CD4-positive, alpha-beta memory T cell (primary cell): ENCODE measurements at regions of chr1 and their contacts with region 1.

Region 1: DNA sequence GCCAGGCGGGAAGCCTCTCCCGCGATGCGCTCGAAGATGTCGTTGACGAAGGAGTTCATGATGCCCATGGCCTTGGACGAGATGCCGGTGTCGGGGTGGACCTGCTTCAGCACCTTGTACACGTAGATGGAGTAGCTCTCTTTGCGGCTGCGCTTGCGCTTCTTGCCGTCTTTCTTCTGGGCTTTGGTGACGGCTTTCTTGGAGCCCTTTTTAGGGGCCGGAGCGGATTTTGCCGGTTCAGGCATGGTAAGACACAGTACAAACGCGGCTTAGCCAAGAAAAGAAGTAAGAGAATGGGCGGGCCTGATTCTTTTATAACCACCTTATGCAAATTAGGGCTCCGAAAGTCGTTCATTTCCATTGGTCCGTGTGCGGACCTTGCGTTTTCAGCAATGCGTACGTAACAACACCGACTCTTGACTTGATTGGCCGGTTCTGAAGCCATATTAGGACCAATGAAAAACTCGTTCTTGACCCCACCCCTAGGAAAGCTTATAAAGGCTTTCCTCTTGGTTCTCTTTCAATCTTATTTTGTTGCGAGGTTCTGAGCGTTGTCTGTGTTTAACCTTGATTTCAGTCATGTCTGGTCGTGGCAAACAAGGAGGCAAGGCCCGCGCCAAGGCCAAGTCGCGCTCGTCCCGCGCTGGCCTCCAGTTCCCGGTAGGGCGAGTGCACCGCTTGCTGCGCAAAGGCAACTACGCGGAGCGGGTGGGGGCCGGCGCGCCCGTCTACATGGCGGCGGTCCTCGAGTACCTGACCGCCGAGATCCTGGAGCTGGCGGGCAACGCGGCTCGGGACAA is 12.8 kb upstream of the BOLA1 start:
- DNase-seq: peak; percentile 94 to 97 (median 96)
- H3K4me3 ChIP-seq: peak overlapping the region; percentile 75 to 82
- H3K4me3 Mint-ChIP-seq: no peak overlapping the region
- H3K27ac ChIP-seq: peak overlapping the region; percentile 88
- H3K27ac Mint-ChIP-seq: no peak overlapping the region
- H3K4me1 ChIP-seq: peaks cover 27% of the 10 kb centered on the region
- H3K4me1 Mint-ChIP-seq: peaks cover 8 to 19% (median 10%) of the 10 kb centered on the region in 4 donors
- H3K27me3 ChIP-seq: no peaks in the 10 kb centered on the region
- H3K27me3 Mint-ChIP-seq: no peaks in the 10 kb centered on the region

Region 2: GRCh38 chr1:149849947-149850360 is 36.6 kb before region 1 on chr1:
- CTCF ChIA-PET with region 1: interaction called, 15 read pairs
- POLR2A ChIA-PET with region 1: interaction called, 526 read pairs
- intact Hi-C with region 1: no loop called
- DNase-seq: peak; percentile 16 to 32 (median 30)
- H3K4me3 ChIP-seq: peak overlapping the region; percentile 53 to 62
- H3K4me3 Mint-ChIP-seq: peak overlapping the region; percentile 86 to 97 (median 93)
- H3K27ac ChIP-seq: peak overlapping the region; percentile 83
- H3K27ac Mint-ChIP-seq: peak overlapping the region; percentile 85 to 99 (median 91)
- H3K4me1 ChIP-seq: peaks cover 50% of the 10 kb centered on the region
- H3K4me1 Mint-ChIP-seq: peaks cover 39 to 52% (median 47%) of the 10 kb centered on the region in 4 donors
- H3K27me3 ChIP-seq: no peaks in the 10 kb centered on the region
- H3K27me3 Mint-ChIP-seq: no peaks in the 10 kb centered on the region

Region 3: DNA sequence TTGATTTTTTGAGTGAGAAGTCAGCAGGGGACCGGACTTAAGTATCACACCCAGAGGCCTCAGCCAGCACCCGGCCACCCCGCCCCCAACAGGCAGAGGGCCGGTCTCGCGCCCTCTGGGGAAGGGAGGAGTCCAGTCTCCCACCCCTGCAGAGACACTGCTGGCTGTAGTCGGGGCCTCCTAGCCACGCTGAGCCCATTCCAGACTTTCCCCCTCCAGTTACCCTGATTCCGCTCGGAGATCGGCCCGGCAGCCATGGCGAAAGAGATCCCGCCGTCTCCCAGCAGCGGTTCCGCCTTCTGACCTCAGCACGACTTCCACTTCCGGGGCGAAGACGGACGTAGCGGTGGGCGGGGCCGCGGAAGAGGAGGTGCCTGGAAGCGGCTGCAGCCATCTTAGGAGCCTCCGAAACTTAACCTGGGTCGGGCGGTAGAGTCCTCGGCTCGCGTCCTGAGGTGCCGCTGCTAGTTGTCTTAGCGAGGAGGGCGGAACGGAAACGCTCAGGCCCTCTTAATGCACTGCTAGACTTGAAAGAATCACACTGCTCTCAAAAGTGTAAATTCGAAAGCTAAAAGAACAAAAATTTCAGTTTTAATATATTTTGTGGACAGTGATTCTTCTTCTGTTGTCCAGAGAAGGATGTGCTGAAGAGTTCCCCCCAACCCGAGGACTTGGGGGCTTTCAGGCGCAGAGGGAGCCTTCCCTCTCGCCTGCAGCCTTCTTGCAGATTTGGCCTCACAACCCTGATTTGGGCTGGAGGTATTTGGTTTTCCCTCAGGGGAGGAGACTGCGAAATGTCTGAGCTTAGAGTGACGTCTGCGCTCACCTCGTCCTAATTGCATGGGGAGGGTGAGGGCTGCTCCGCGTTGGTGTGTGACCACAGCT is 41.1 kb after region 1 on chr1 and contains the start of gene SF3B4:
- CTCF ChIA-PET with region 1: interaction called, 6 read pairs
- POLR2A ChIA-PET with region 1: interaction called, 176 read pairs
- intact Hi-C with region 1: loop called (anchors 1 kb)
- DNase-seq: peak; percentile 93 to 97 (median 94)
- H3K4me3 ChIP-seq: peak within 1 kb of the TSS; percentile 80 to 86
- H3K4me3 Mint-ChIP-seq: peak within 1 kb of the TSS; percentile 90 to 98 (median 96)
- H3K27ac ChIP-seq: peak within 1 kb of the TSS; percentile 87
- H3K27ac Mint-ChIP-seq: peak within 1 kb of the TSS; percentile 95 to 98 (median 97)
- H3K4me1 ChIP-seq: peaks cover 40% of the 10 kb centered on the region
- H3K4me1 Mint-ChIP-seq: peaks cover 28 to 53% (median 41%) of the 10 kb centered on the region in 4 donors
- H3K27me3 ChIP-seq: no peaks in the 10 kb centered on the region
- H3K27me3 Mint-ChIP-seq: peaks cover 3% of the 10 kb centered on the region in 2 donors
- total RNA-seq, gene SF3B4: 47.7 to 48.8 TPM

Region 4: DNA sequence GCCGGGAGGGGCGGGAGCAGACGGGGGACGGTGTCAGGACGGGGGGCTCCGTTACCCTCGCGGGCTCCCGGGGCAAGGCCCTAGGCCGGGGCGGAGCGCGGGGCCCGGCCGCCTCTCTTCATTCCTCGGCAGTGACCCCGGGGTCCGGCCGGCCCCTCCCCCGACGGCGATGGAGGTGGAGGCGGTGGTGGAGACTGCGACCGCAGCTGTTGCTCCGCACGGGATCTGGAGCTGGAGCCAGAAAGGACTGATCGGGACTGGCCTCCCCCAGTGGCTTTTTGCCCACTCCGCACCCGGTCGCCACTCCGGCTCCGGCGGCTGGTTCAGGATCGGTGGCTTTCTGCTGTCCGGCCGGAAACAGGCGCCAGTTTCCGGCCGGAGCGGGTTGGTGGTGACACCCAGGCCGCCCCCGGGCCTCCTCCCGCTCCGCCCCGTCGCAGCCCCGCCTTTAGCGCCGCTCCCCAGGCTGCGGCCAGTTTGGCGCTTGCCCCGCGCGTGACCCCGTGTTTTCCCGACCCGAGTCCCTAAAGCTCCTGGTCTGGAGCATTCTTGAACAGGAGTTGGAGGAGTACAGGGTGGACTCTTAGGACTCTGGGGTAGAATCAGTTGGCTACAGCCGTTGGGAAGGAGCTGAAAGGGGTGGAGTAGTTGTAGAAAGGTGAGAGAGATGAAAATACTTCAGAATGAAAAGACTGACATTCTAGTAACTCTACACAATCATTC is 124.0 kb after region 1 on chr1 and contains the start of gene OTUD7B:
- CTCF ChIA-PET with region 1: no interaction called
- POLR2A ChIA-PET with region 1: interaction called, 75 read pairs
- intact Hi-C with region 1: no loop called
- DNase-seq: peak; percentile 46 to 64 (median 49)
- H3K4me3 ChIP-seq: peak within 1 kb of the TSS; percentile 64 to 87
- H3K4me3 Mint-ChIP-seq: peak within 1 kb of the TSS; percentile 89 to 99 (median 96)
- H3K27ac ChIP-seq: peak within 1 kb of the TSS; percentile 63
- H3K27ac Mint-ChIP-seq: peak within 1 kb of the TSS; percentile 62 to 94 (median 91)
- H3K4me1 ChIP-seq: peaks cover 20% of the 10 kb centered on the region
- H3K4me1 Mint-ChIP-seq: peaks cover 22 to 36% (median 26%) of the 10 kb centered on the region in 4 donors
- H3K27me3 ChIP-seq: no peaks in the 10 kb centered on the region
- H3K27me3 Mint-ChIP-seq: no peaks in the 10 kb centered on the region
- total RNA-seq, gene OTUD7B: 15.3 to 17.6 TPM

Region 5: GRCh38 chr1:150106341-150106740 is 219.7 kb after region 1 on chr1:
- CTCF ChIA-PET with region 1: no interaction called
- POLR2A ChIA-PET with region 1: interaction called, 39 read pairs
- intact Hi-C with region 1: no loop called
- DNase-seq: peak; percentile 58 to 72 (median 66)
- H3K4me3 ChIP-seq: no peak overlapping the region
- H3K4me3 Mint-ChIP-seq: peak overlapping the region; percentile 71 to 90 (median 86)
- H3K27ac ChIP-seq: peak overlapping the region; percentile 25
- H3K27ac Mint-ChIP-seq: peak overlapping the region; percentile 92 to 98 (median 94)
- H3K4me1 ChIP-seq: peaks cover 83% of the 10 kb centered on the region
- H3K4me1 Mint-ChIP-seq: peaks cover 64 to 92% (median 75%) of the 10 kb centered on the region in 4 donors
- H3K27me3 ChIP-seq: no peaks in the 10 kb centered on the region
- H3K27me3 Mint-ChIP-seq: no peaks in the 10 kb centered on the region

Region 6: GRCh38 chr1:150186789-150187559 is 300.4 kb after region 1 on chr1:
- CTCF ChIA-PET with region 1: interaction called, 19 read pairs
- POLR2A ChIA-PET with region 1: interaction called, 31 read pairs
- intact Hi-C with region 1: no loop called
- DNase-seq: peak; percentile 42 to 71 (median 65)
- H3K4me3 ChIP-seq: no peak overlapping the region
- H3K4me3 Mint-ChIP-seq: peak overlapping the region in 7 of 8 donors; percentile 1 to 65 (median 44)
- H3K27ac ChIP-seq: no peak overlapping the region
- H3K27ac Mint-ChIP-seq: peak overlapping the region in 4 of 7 donors; percentile 19 to 85 (median 70)
- H3K4me1 ChIP-seq: peaks cover 8% of the 10 kb centered on the region
- H3K4me1 Mint-ChIP-seq: peaks cover 5 to 13% (median 8%) of the 10 kb centered on the region in 4 donors
- H3K27me3 ChIP-seq: no peaks in the 10 kb centered on the region
- H3K27me3 Mint-ChIP-seq: no peaks in the 10 kb centered on the region

Region 7: DNA sequence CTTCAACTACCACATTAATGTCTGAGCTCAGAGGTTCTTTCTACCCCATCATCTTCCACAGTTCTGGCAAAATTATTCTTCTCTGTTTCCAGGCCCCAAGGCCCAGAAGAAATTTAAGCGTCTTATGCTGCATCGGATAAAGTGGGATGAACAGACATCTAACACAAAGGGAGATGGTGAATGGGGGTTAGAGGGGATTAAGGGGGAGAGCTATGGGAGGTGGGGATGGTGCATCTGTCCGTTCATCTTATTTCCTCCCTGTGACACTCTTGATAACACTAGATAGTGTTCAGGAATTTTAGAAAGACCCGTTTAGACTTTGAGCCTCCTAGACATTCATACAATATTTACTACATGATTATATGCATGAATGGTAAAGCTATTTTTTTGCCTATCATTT is 459.7 kb after region 1 on chr1:
- CTCF ChIA-PET with region 1: no interaction called
- POLR2A ChIA-PET with region 1: no interaction called
- intact Hi-C with region 1: no loop called
- DNase-seq: no peak
- H3K4me3 ChIP-seq: no peak overlapping the region
- H3K4me3 Mint-ChIP-seq: no peak overlapping the region
- H3K27ac ChIP-seq: no peak overlapping the region
- H3K27ac Mint-ChIP-seq: peak overlapping the region in 3 of 7 donors; percentile 11 to 88 (median 16)
- H3K4me1 ChIP-seq: no peaks in the 10 kb centered on the region
- H3K4me1 Mint-ChIP-seq: no peaks in the 10 kb centered on the region
- H3K27me3 ChIP-seq: no peaks in the 10 kb centered on the region
- H3K27me3 Mint-ChIP-seq: no peaks in the 10 kb centered on the region